ENCODE measurements at regions of chr9 and their contacts with region 1.

Region 1: DNA sequence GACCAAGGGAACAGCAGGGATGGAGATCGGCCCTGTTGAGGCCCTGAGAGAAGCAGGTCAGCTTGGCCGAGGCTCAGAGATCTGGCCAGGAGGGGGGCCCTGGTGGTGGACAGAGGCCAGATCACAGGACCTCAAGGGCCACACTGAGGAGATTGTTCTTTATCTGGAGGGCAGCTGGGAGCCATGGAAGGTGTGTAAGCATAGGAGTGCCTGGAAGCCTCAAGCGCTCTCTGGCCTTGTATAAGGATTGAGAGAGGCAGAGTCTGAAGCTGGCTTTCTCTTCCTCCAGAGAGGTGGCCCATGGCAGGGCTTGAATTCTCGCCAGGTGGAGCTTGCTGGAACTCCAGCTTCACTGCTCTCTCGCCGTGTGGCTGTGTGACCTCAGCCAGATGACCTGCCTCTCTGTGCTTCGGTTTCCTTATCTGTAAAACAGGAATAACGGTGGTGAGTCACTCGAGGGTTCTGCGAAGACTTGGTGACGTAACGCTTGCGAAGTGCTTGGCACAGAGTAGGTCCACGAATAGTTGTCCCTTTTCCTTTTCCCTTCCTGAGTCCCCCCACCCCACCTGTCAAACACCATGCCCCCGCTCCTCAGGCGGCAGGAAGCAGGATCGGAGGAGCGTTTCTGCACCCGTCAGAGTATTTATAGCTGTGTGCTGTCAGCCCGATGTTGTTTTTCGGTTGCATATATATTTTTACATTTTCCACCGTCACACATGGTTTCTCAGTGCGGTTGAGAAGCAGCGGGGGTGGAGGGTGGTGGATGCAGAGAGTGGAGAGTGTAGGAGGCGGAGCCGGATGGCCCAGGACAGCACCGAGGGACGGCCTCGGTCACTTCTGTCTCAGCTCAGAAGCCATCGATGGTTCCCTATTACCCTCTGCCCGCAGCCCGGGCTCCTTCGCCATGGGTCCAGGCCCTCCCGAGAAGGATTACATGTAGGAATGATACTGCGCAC is 17.0 kb upstream of the CRB2 start:
- DNase-seq: peak; percentile 59
- H3K4me3 Mint-ChIP-seq: peak overlapping the region; percentile 73
- H3K27ac Mint-ChIP-seq: peak overlapping the region; percentile 95
- H3K4me1 Mint-ChIP-seq: peaks cover 40% of the 10 kb centered on the region
- H3K27me3 Mint-ChIP-seq: no peaks in the 10 kb centered on the region

Region 2: DNA sequence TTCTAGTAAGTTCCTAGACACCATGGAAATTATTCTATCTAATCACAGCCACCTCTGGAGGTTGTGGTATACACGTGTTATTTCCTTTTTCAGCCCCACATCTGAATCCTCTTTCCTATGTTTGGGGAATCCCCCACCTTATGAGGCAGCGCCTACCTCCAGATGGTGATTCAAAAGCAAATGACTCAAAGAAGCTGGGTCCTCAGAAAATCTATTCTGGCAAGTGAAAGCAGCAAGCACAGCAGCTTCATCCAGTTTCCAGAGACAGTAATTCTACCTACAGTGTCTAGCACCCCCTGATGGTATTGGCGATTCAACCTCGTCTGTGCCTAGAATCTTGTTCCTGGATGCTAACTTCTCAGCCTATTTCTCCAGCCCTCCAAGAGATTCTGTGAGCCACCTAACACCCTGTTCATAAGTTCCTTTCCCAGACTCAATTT is 113.6 kb before region 1 on chr9:
- intact Hi-C with region 1: loop called (anchors 1 kb)
- DNase-seq: peak; percentile 27
- H3K4me3 Mint-ChIP-seq: no peak overlapping the region
- H3K27ac Mint-ChIP-seq: peak overlapping the region; percentile 69
- H3K4me1 Mint-ChIP-seq: peaks cover 29% of the 10 kb centered on the region
- H3K27me3 Mint-ChIP-seq: no peaks in the 10 kb centered on the region

Region 3: DNA sequence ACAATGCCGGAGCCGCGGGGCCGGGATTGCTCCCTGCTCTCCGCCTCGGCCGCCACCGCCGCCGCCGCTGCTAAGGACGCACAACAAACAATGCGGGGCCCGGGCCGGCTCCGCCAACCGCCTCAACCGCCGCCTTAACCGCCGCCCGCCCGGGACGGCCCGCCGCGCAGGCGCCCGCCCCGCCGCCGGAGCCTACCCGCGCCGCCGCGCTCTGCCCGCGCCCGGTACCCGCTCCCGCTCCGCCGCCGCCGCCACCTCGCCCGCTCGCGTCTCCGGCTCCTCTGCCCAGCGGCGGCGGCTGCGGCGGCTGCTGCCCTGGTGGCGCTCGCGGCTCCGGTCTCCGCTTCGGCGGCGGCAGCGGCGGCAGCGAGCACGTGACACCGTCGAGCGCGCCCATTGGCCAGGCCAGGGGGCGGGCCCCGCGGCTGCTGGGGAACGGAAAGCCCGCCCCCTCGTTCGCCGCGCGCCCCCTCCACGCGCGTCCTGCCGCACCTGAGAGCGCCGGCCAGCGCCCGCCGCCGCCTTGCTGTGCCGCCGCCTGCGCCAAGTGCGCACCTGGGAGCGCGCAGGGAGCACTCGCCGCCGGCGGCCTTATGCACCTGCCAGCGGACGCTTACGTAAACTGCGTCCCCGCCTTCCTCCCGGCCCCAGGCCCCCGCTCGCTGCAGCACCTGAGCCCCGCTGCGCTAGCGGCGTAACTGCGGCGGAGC is 70.6 kb before region 1 on chr9 and contains the start of gene STRBP:
- intact Hi-C with region 1: loop called (anchors 1 kb)
- DNase-seq: peak; percentile 89
- H3K4me3 Mint-ChIP-seq: peak within 1 kb of the TSS; percentile 75
- H3K27ac Mint-ChIP-seq: peak within 1 kb of the TSS; percentile 14
- H3K4me1 Mint-ChIP-seq: peaks cover 22% of the 10 kb centered on the region
- H3K27me3 Mint-ChIP-seq: peaks cover 21% of the 10 kb centered on the region
- total RNA-seq, gene STRBP: 19.9 and 20.6 TPM in 2 replicates

Region 4: DNA sequence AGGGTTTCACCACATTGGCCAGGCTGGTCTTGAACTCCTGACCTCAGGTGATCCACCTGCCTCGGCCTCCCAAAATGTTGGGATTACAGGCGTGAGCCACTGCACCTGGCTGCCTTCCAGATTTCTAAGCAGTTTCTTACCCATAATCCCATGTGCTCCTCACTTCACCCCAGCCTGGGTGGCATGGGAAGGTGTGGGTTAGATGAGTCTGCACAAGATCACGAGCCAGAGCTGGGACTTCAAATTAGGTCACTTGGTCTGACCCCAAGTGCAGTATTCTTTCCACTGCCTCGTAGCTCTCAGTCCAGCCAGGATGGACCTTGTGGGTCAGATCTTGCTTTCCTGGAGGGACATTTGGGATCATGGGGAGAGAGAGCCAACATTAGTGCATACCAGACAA is 33.1 kb before region 1 on chr9:
- intact Hi-C with region 1: loop called (anchors 2 kb)
- DNase-seq: no peak
- H3K4me3 Mint-ChIP-seq: no peak overlapping the region
- H3K27ac Mint-ChIP-seq: no peak overlapping the region
- H3K4me1 Mint-ChIP-seq: peaks cover 26% of the 10 kb centered on the region
- H3K27me3 Mint-ChIP-seq: peaks cover 4% of the 10 kb centered on the region

Region 5: DNA sequence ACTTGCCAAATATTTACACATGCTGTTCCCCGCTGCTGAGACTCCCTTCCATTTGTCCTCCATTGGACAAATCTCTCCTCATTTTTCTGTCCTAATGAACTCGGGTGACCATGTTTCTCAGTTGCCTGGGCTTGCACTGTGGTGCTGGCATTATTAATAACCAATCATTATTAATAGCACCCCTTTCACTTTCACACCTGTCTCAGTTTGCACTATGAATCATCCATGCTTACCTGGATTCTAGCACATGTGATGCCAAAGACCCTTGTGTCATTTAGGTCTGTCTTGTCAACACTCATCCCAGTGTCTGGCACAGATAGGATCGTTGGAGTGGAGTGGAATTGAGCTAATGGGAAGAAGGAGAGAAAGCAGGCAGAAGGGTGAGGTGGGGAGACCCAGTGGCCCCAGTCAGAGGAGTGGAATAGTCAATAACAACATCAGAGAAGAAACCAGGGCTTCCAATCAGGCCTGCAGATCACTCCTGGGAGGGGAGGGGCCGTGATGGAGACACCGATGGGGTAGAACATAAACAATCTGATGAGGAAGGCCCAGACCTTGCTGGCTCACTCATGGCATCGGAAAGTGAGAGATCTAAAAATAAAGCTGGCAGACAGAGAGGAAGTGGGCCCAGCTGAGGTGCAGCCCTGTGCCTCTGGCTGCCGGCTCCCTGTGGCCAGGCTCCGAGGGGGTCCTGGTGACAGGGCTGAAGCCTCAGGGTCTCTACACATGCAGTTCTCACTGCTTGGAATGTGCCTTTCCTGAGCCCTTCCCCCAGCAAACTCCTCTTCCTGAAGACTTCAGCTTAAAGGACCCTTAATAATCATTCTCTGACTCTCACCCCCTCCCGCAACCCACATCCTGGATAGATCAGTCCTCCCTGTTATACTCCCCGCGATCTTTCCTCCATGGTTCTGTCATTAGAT is 16.5 kb before region 1 on chr9:
- intact Hi-C with region 1: loop called (anchors 1 kb)
- DNase-seq: peak; percentile 57
- H3K4me3 Mint-ChIP-seq: peak overlapping the region; percentile 24
- H3K27ac Mint-ChIP-seq: peak overlapping the region; percentile 87
- H3K4me1 Mint-ChIP-seq: peaks cover 55% of the 10 kb centered on the region
- H3K27me3 Mint-ChIP-seq: no peaks in the 10 kb centered on the region

Measured in activated T-helper 2 cell treated with anti-CD3 and anti-CD28 coated beads, Interferon-gamma antibody, Interleukin-2, Interleukin-4, amounts not matched to agents 10 μg/mL and 5 μg/mL and 100 μg/mL, durations not matched to agents 14 hours and 24 hours and 36 hours (primary cell).